Activated B cell treated with CpG ODN at 0.5 μM for 24 hours (primary cell): ENCODE measurements at regions of chrX and their contacts with region 1.

Region 1: DNA sequence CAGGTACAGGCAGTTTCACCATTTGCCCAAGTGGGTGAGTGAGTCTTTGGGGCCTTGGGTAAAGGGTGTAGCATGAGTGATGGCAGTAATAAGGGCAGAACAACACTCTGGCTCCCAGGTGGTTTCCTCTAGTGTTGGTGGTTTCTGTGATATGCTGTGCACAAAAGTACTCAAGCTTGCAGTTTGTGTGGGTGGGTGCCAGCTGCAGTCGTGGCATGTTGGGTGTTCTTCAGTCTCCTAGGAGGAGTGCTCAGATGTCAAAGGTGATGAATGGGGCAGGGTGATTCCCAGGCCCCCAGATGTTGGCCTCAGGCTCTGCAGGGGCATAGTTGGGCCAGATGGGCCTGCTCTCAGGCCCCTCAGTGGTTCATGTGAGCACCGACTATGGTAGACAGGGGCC is 166.1 kb upstream of the KLF8 start:
- DNase-seq: no peak
- ATAC-seq: peak; percentile 72
- H3K4me3 Mint-ChIP-seq: peak overlapping the region; percentile 15
- H3K27ac Mint-ChIP-seq: peak overlapping the region; percentile 89
- H3K4me1 Mint-ChIP-seq: peaks cover 78% of the 10 kb centered on the region
- H3K27me3 Mint-ChIP-seq: no peaks in the 10 kb centered on the region
- CTCF ChIP-seq: no peak

Region 2: DNA sequence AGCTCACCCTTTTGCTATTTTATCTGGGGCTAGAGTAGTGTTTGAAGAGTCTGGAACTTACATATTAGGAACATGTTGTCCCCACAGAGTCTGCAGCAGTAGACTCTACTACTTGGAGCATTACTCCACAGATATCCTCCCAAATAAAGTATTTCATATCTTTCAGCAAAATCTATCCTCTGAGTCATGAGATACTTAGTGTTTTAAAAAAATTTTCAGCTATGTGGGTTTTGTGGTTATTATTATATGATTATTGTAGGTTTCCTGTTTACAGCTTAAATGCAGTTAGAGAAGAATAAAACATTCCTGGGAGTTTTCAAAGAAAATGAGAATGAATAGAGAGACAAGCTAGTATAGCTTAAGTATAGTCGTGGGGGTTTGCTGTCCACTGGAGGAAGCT is 946.3 kb before region 1 on chrX:
- CTCF ChIA-PET with region 1: no interaction called
- POLR2A ChIA-PET with region 1: no interaction called
- intact Hi-C with region 1: no loop called
- DNase-seq: no peak
- ATAC-seq: no peak
- H3K4me3 Mint-ChIP-seq: no peak overlapping the region
- H3K27ac Mint-ChIP-seq: no peak overlapping the region
- H3K4me1 Mint-ChIP-seq: no peaks in the 10 kb centered on the region
- H3K27me3 Mint-ChIP-seq: peaks cover 3% of the 10 kb centered on the region
- CTCF ChIP-seq: no peak

Region 3: GRCh38 chrX:55196688-55197087 is 869.3 kb before region 1 on chrX:
- CTCF ChIA-PET with region 1: no interaction called
- POLR2A ChIA-PET with region 1: no interaction called
- intact Hi-C with region 1: no loop called
- DNase-seq: no peak
- ATAC-seq: no peak
- H3K4me3 Mint-ChIP-seq: no peak overlapping the region
- H3K27ac Mint-ChIP-seq: no peak overlapping the region
- H3K4me1 Mint-ChIP-seq: no peaks in the 10 kb centered on the region
- H3K27me3 Mint-ChIP-seq: no peaks in the 10 kb centered on the region
- CTCF ChIP-seq: no peak

Region 4: DNA sequence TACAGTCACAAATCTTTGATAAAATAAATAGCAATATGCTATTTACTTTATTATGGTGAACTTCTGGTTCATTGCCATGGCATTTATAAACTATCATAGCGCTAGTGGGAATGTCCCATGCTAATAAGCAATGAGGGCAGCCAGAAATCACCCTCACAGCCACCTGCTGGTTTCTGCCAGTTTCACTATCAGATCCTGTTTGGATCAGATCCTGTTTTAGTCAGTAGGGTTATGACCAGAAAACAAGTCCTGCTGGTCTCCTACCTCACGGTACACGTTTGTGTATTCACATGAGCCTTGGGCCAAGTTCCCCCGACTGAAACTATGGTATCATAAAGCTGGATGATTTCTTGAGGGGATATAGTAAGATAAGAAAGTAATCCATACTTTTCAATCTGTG is 425.2 kb before region 1 on chrX:
- CTCF ChIA-PET with region 1: no interaction called
- POLR2A ChIA-PET with region 1: no interaction called
- intact Hi-C with region 1: loop called (anchors 10 kb)
- DNase-seq: no peak
- ATAC-seq: peak; percentile 71
- H3K4me3 Mint-ChIP-seq: no peak overlapping the region
- H3K27ac Mint-ChIP-seq: peak overlapping the region; percentile 18
- H3K4me1 Mint-ChIP-seq: peaks cover 9% of the 10 kb centered on the region
- H3K27me3 Mint-ChIP-seq: no peaks in the 10 kb centered on the region
- CTCF ChIP-seq: no peak

Region 5: GRCh38 chrX:55919367-55920221 is 146.4 kb before region 1 on chrX:
- CTCF ChIA-PET with region 1: interaction called, 7 read pairs
- POLR2A ChIA-PET with region 1: interaction called, 6 read pairs
- intact Hi-C with region 1: loop called (anchors 2 kb)
- DNase-seq: peak; percentile 50
- ATAC-seq: peak; percentile 88
- H3K4me3 Mint-ChIP-seq: peak overlapping the region; percentile 52
- H3K27ac Mint-ChIP-seq: peak overlapping the region; percentile 79
- H3K4me1 Mint-ChIP-seq: peaks cover 38% of the 10 kb centered on the region
- H3K27me3 Mint-ChIP-seq: no peaks in the 10 kb centered on the region
- CTCF ChIP-seq: no peak

Region 6: GRCh38 chrX:56025872-56026571 is 40.0 kb before region 1 on chrX:
- CTCF ChIA-PET with region 1: no interaction called
- POLR2A ChIA-PET with region 1: no interaction called
- intact Hi-C with region 1: loop called (anchors 5 kb)
- DNase-seq: no peak
- ATAC-seq: no peak
- H3K4me3 Mint-ChIP-seq: no peak overlapping the region
- H3K27ac Mint-ChIP-seq: no peak overlapping the region
- H3K4me1 Mint-ChIP-seq: peaks cover 16% of the 10 kb centered on the region
- H3K27me3 Mint-ChIP-seq: no peaks in the 10 kb centered on the region
- CTCF ChIP-seq: no peak

Region 7: GRCh38 chrX:56232221-56233082 is 166.4 kb after region 1 on chrX and contains the start of gene KLF8:
- CTCF ChIA-PET with region 1: no interaction called
- POLR2A ChIA-PET with region 1: interaction called, 22 read pairs
- intact Hi-C with region 1: loop called (anchors 2 kb)
- DNase-seq: peak; percentile 25
- ATAC-seq: peak; percentile 83
- H3K4me3 Mint-ChIP-seq: peak within 1 kb of the TSS; percentile 88
- H3K27ac Mint-ChIP-seq: peak within 1 kb of the TSS; percentile 83
- H3K4me1 Mint-ChIP-seq: peaks cover 38% of the 10 kb centered on the region
- H3K27me3 Mint-ChIP-seq: no peaks in the 10 kb centered on the region
- CTCF ChIP-seq: no peak
- total RNA-seq, gene KLF8: 15.2 and 17.8 TPM in 2 replicates